Tibial artery (tissue), 4 donors: ENCODE measurements at regions of chr13 and their contacts with region 1.

Region 1: DNA sequence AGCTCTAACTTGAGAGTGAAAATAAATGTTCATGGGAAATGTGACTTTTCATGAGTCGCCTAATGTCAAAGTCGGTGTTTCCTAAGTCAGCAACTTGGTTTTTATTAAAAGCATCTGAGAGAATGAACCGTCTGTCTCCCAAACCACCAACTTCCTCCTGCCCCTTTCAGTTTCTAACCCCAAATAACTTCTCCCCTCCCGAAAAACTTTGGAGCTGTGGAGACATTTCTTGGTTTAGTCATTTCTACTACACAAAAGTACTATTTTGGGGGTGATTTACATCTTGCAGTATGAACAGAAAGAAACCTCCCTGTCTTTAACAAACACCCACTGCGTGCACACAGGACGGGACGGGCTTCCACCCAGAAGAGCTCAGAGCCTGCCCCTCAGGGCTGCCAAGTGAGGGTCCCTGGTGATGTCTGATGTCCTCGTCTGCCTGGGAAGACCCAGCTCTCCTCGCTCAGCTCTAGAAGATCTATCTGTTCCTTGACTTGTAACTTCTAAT is 65.0 kb downstream of the RASA3 start:
- DNase-seq: peak in 1 of 2 donors; percentile 18
- H3K4me3 ChIP-seq: no peak overlapping the region
- H3K27ac ChIP-seq: peak overlapping the region; percentile 90 to 98
- H3K4me1 ChIP-seq: peaks cover 12 to 65% (median 62%) of the 10 kb centered on the region in 4 donors
- H3K27me3 ChIP-seq: no peaks in the 10 kb centered on the region
- CTCF ChIP-seq: no peak

Region 2: GRCh38 chr13:113110048-113110851 is 957.2 kb before region 1 on chr13:
- intact Hi-C with region 1: no loop called
- DNase-seq: no peak
- H3K4me3 ChIP-seq: peak overlapping the region; percentile 30 to 40
- H3K27ac ChIP-seq: no peak overlapping the region
- H3K4me1 ChIP-seq: peaks cover 0 to 18% (median 14%) of the 10 kb centered on the region in 4 donors
- H3K27me3 ChIP-seq: peaks cover 0 to 34% of the 10 kb centered on the region in 2 donors
- CTCF ChIP-seq: no peak

Region 3: DNA sequence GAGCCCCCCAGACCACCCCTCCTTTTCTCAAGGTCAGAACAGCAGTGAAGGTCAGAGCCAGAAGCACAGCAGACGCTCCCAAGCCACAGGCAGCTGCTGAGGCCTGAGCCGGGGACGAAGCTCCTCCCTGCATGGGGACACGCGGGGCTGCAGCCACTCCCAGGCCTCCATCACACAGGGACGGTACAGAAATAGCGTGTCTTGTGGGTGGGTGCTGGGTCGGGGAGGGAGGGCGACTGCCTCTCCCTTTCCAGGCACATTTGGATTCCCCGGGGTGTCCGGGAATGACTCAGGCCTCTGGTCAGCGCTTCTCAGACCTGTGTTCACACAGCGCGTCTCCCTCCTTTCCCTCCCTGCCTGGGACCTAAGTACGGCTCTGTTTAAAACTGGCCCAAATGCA is 31.8 kb after region 1 on chr13:
- intact Hi-C with region 1: loop called (anchors 2 kb)
- DNase-seq: peak; percentile 87 to 95
- H3K4me3 ChIP-seq: no peak overlapping the region
- H3K27ac ChIP-seq: peak overlapping the region; percentile 61 to 65
- H3K4me1 ChIP-seq: peaks cover 0 to 33% (median 28%) of the 10 kb centered on the region in 4 donors
- H3K27me3 ChIP-seq: no peaks in the 10 kb centered on the region
- CTCF ChIP-seq: no peak

Region 4: GRCh38 chr13:114132419-114133121 is 65.1 kb after region 1 on chr13 and contains the start of gene RASA3:
- intact Hi-C with region 1: loop called (anchors 2 kb)
- DNase-seq: peak; percentile 73 to 89
- H3K4me3 ChIP-seq: peak within 1 kb of the TSS; percentile 93 to 94
- H3K27ac ChIP-seq: peak within 1 kb of the TSS; percentile 79 to 84
- H3K4me1 ChIP-seq: peaks cover 0 to 43% (median 39%) of the 10 kb centered on the region in 4 donors
- H3K27me3 ChIP-seq: no peaks in the 10 kb centered on the region
- CTCF ChIP-seq: no peak